ENCODE measurements at regions of chr5 and their contacts with region 1.

Region 1: GRCh38 chr5:134533115-134533815 is 7.8 kb downstream of the JADE2 start:
- DNase-seq: no peak
- H3K4me3 ChIP-seq: no peak overlapping the region
- H3K4me3 Mint-ChIP-seq: peak overlapping the region in 5 of 8 donors; percentile 33 to 54 (median 39)
- H3K27ac ChIP-seq: no peak overlapping the region
- H3K27ac Mint-ChIP-seq: peak overlapping the region; percentile 29 to 82 (median 48)
- H3K4me1 ChIP-seq: peaks cover 94% of the 10 kb centered on the region
- H3K4me1 Mint-ChIP-seq: peaks cover 67 to 100% (median 87%) of the 10 kb centered on the region in 4 donors
- H3K27me3 ChIP-seq: no peaks in the 10 kb centered on the region
- H3K27me3 Mint-ChIP-seq: no peaks in the 10 kb centered on the region

Region 2: DNA sequence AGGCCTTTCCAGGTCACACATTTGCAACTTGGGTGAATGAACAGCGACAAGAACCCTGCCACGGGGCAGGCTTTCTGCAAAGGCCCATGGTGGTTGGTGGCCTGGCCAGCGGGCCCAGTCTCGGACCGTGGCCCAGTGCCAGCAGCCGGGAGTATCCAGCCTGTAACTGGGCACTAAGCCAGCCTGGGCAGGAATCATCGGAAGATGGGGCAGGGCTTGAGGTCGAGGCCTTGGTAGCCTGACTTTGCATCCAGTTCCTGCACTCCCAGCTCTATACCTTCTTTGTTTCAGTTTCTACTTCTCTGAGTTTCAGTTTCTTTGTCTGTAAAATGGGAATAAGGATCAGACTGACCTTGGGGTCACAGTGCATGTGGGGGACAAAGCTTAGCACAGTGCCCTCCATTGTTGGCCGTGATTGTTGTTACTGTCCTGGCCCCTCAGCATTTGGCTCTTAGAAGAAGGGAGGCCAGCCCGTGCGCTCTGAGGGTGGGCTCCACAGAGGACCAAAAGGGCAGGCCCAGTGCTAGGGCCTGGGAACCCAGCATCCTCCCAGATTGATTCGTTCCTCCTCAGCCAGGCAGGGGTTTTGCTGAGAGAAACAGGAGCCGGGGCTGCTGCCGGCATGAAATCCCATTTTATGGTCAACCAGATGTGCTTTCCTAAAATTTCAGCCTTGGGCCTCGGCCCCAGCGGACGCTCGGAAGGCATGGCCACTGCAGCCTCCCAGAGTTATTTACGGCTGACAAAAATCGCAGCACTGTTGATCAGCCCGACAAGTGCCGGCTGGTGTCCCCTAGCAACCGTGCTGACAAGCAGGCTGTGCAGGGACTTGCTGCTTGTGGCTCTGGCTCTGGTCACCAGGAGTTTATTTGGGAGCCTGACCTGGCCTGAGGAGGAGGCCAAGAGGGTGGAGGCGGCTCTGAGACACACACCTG is 35.8 kb after region 1 on chr5:
- CTCF ChIA-PET with region 1: interaction called, 3 read pairs
- POLR2A ChIA-PET with region 1: interaction called, 3 read pairs
- intact Hi-C with region 1: loop called (anchors 5 kb)
- DNase-seq: no peak
- H3K4me3 ChIP-seq: no peak overlapping the region
- H3K4me3 Mint-ChIP-seq: no peak overlapping the region
- H3K27ac ChIP-seq: no peak overlapping the region
- H3K27ac Mint-ChIP-seq: peak overlapping the region in 4 of 7 donors; percentile 29 to 85 (median 68)
- H3K4me1 ChIP-seq: peaks cover 12% of the 10 kb centered on the region
- H3K4me1 Mint-ChIP-seq: peaks cover 13 to 32% (median 15%) of the 10 kb centered on the region in 4 donors
- H3K27me3 ChIP-seq: no peaks in the 10 kb centered on the region
- H3K27me3 Mint-ChIP-seq: no peaks in the 10 kb centered on the region

Measured in CD4-positive, alpha-beta memory T cell (primary cell).